WTC11 (cell line): ENCODE measurements at regions of chr3 and their contacts with region 1.

Region 1: GRCh38 chr3:124032648-124033359 is 40.9 kb upstream of the ROPN1 start:
- DNase-seq: peak; percentile 93
- ATAC-seq: peak; percentile 85
- H3K4me3 Mint-ChIP-seq: peak overlapping the region; percentile 90
- H3K27ac Mint-ChIP-seq: 0 out of 2 replicates have a peak overlapping the region, but pooled peaks have one; percentile 10
- H3K4me1 Mint-ChIP-seq: peaks cover 13% of the 10 kb centered on the region
- H3K27me3 Mint-ChIP-seq: peaks cover 27% of the 10 kb centered on the region
- CTCF ChIP-seq: peak; percentile 64

Region 2: DNA sequence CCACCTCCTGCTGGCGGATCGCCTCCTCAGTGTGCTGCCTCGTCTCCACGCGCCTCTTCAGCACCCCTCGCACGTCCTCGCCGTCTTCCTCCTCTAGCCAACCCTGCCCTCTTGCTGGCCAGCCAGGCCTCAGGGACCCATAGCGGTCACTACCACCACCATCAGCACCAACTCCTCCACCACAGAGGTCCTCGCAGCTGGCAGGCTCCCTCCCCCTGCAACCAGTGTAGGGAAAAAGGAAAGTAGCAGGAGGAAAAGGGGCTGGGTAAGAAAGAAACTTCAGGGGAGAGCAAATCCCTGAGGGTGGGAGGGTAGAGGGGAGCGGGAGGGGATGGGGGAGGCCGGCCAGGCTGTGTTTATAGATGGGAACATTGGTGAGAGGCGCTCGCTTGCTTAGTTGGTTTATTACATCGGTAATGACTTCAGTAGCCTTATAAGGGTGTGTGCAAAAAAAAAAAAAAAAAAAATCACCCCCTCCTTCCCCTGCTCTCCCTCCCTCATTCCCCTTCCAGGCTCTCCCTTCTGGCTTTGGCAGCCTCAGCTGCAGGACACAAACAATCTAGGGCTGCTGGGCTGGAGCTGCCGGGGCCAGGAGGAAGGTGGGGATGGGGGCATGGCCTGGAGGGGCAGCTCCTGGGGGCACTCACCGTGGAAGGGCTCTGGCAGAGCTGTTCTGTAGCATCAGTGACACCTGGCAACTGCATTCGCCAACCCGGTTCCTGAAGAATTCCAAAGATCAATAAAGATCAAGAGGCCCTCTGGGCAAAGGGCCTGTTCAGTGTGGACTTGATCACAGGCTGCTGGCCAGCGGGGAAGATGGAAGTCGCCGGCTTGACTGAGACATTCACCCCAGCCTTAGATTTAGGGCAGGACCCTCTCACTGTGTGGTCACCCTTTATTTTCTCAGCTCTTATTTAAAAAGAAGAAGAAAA is 331.7 kb before region 1 on chr3:
- CTCF ChIA-PET with region 1: no interaction called
- POLR2A ChIA-PET with region 1: no interaction called
- DNase-seq: no peak
- ATAC-seq: no peak
- H3K4me3 Mint-ChIP-seq: no peak overlapping the region
- H3K27ac Mint-ChIP-seq: no peak overlapping the region
- H3K4me1 Mint-ChIP-seq: peaks cover 6% of the 10 kb centered on the region
- H3K27me3 Mint-ChIP-seq: no peaks in the 10 kb centered on the region
- CTCF ChIP-seq: no peak

Region 3: GRCh38 chr3:123859177-123859576 is 173.6 kb before region 1 on chr3:
- CTCF ChIA-PET with region 1: no interaction called
- POLR2A ChIA-PET with region 1: no interaction called
- DNase-seq: no peak
- ATAC-seq: no peak
- H3K4me3 Mint-ChIP-seq: no peak overlapping the region
- H3K27ac Mint-ChIP-seq: no peak overlapping the region
- H3K4me1 Mint-ChIP-seq: no peaks in the 10 kb centered on the region
- H3K27me3 Mint-ChIP-seq: no peaks in the 10 kb centered on the region
- CTCF ChIP-seq: no peak

Region 4: GRCh38 chr3:123907720-123908119 is 125.1 kb before region 1 on chr3:
- CTCF ChIA-PET with region 1: interaction called, 17 read pairs
- POLR2A ChIA-PET with region 1: no interaction called
- DNase-seq: no peak
- ATAC-seq: peak; percentile 34; the same call in 1 of the 2 replicates
- H3K4me3 Mint-ChIP-seq: no peak overlapping the region
- H3K27ac Mint-ChIP-seq: no peak overlapping the region
- H3K4me1 Mint-ChIP-seq: peaks cover 3% of the 10 kb centered on the region; the same call in 1 of the 2 replicates
- H3K27me3 Mint-ChIP-seq: no peaks in the 10 kb centered on the region; the same call in 1 of the 2 replicates
- CTCF ChIP-seq: no peak

Region 5: GRCh38 chr3:123997543-123997942 is 35.3 kb before region 1 on chr3:
- CTCF ChIA-PET with region 1: no interaction called
- POLR2A ChIA-PET with region 1: no interaction called
- DNase-seq: no peak
- ATAC-seq: no peak
- H3K4me3 Mint-ChIP-seq: no peak overlapping the region
- H3K27ac Mint-ChIP-seq: no peak overlapping the region
- H3K4me1 Mint-ChIP-seq: no peaks in the 10 kb centered on the region
- H3K27me3 Mint-ChIP-seq: peaks cover 45% of the 10 kb centered on the region
- CTCF ChIP-seq: no peak

Region 6: GRCh38 chr3:124014366-124014942 is 18.4 kb before region 1 on chr3:
- CTCF ChIA-PET with region 1: interaction called, 23 read pairs
- POLR2A ChIA-PET with region 1: interaction called, 3 read pairs
- DNase-seq: no peak
- ATAC-seq: no peak
- H3K4me3 Mint-ChIP-seq: no peak overlapping the region
- H3K27ac Mint-ChIP-seq: no peak overlapping the region
- H3K4me1 Mint-ChIP-seq: peaks cover 3% of the 10 kb centered on the region; the same call in 1 of the 2 replicates
- H3K27me3 Mint-ChIP-seq: peaks cover 5% of the 10 kb centered on the region; the same call in 1 of the 2 replicates
- CTCF ChIP-seq: no peak

Region 7: GRCh38 chr3:124063197-124063909 is 30.5 kb after region 1 on chr3:
- CTCF ChIA-PET with region 1: interaction called, 28 read pairs
- POLR2A ChIA-PET with region 1: interaction called, 3 read pairs
- DNase-seq: no peak
- ATAC-seq: no peak
- H3K4me3 Mint-ChIP-seq: no peak overlapping the region
- H3K27ac Mint-ChIP-seq: no peak overlapping the region
- H3K4me1 Mint-ChIP-seq: no peaks in the 10 kb centered on the region; the same call in 1 of the 2 replicates
- H3K27me3 Mint-ChIP-seq: peaks cover 2% of the 10 kb centered on the region
- CTCF ChIP-seq: no peak

Region 8: GRCh38 chr3:124088801-124089200 is 56.0 kb after region 1 on chr3:
- CTCF ChIA-PET with region 1: interaction called, 14 read pairs
- POLR2A ChIA-PET with region 1: no interaction called
- DNase-seq: no peak
- ATAC-seq: no peak
- H3K4me3 Mint-ChIP-seq: no peak overlapping the region
- H3K27ac Mint-ChIP-seq: no peak overlapping the region
- H3K4me1 Mint-ChIP-seq: peaks cover 23% of the 10 kb centered on the region
- H3K27me3 Mint-ChIP-seq: no peaks in the 10 kb centered on the region
- CTCF ChIP-seq: no peak

Region 9: DNA sequence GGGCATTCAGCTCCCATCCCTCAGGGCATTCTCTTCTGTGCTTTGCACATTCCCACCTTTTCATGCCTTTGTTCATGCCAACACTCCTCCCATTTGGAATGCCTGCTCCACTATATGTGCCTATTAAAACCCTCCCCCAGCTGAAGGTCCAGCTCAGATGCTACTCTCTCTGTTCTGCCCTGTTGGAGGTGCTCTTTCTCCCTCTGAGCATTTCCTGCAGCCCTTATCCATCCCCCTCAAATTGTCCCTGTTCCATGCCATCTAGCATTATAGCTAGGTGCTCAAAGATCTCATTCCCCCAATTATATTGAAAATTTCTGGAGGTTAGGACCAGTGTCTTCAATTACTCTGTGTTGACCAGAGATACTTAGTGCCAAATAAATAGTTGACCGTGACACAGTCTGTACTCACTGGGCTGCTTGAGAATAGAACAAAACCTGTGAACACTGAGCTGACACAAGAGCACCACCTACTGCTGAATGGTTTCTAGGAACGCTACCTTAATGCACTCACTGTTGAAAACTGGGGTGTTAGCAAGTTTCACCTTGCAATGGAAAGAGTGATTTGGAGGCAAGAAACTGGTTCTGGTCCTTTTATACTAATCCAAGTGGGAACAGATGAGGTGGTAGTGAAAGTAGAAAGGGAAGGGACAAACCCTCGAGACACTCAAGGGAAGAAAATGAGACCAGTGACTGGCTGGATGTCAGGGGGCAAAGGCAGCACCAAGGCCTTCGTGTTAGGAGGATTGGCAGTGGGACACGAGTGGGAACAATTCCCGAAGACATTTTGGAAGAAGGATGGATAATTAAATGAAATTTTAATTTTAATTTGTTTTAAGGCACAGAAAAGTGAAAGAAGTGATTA is 248.9 kb after region 1 on chr3:
- CTCF ChIA-PET with region 1: interaction called, 22 read pairs
- POLR2A ChIA-PET with region 1: interaction called, 4 read pairs
- DNase-seq: peak; percentile 23
- ATAC-seq: peak; percentile 93
- H3K4me3 Mint-ChIP-seq: no peak overlapping the region
- H3K27ac Mint-ChIP-seq: no peak overlapping the region
- H3K4me1 Mint-ChIP-seq: peaks cover 8% of the 10 kb centered on the region
- H3K27me3 Mint-ChIP-seq: no peaks in the 10 kb centered on the region; the same call in 1 of the 2 replicates
- CTCF ChIP-seq: no peak